Psoas muscle (tissue), 8 donors: ENCODE measurements at regions of chr11 and their contacts with region 1.

Region 1: GRCh38 chr11:27183672-27184457 is 143.2 kb downstream of the BBOX1 start:
- DNase-seq: no peak
- ATAC-seq: peak in 3 of 4 donors; percentile 67 to 81 (median 69)
- H3K4me3 ChIP-seq: no peak overlapping the region
- H3K27ac ChIP-seq: no peak overlapping the region
- H3K4me1 ChIP-seq: peaks cover 4% of the 10 kb centered on the region
- H3K27me3 ChIP-seq: no peaks in the 10 kb centered on the region
- CTCF ChIP-seq: peak; percentile 82

Region 2: DNA sequence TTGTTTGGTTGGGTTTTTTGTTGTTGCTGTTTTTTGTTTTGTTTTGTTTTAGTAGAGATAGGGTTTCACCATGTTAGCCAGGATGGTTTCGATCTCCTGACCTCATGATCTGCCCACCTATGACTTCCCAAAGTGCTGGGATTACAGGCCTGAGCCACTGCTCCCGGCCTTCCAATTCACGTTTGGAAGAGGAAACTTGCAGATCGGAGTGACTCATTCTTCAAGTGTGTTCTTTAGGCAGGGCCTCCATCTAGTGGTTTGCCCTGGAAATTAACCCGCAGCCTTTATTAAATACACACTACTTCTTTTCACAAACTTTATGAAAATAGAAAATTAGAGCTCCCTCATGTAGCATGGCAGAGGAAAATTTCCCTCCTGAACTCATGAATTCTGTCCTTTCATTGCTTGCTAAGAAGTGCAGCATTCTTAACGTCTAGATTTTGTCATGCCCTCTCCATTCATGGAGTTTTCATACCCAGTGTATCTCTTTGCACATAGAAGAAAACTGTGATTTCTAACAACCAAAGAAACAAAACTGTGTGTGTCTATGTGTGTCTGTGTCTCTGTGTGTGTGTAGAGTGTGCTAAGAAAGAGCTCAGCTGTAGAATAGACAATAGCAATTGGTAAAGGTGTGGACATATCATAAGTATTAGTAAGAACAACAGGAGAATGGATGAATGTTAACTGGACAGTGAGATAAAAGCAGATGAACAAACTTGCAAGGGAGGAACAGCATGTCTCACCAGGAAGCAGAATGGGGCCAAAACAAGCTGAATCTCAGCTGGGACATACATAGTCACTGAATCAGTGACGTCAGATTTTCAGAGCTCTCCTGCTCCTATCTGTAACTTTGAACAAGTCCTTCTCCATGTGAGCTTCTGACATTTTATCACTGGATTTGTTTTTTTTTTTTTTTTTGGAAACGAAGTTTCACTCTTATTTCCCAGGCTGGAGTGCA is 24.9 kb before region 1 on chr11:
- intact Hi-C with region 1: no loop called
- DNase-seq: peak; percentile 18 to 45
- ATAC-seq: peak; percentile 73 to 98 (median 89)
- H3K4me3 ChIP-seq: no peak overlapping the region
- H3K27ac ChIP-seq: no peak overlapping the region
- H3K4me1 ChIP-seq: no peaks in the 10 kb centered on the region
- H3K27me3 ChIP-seq: no peaks in the 10 kb centered on the region
- CTCF ChIP-seq: peak; percentile 74

Region 3: DNA sequence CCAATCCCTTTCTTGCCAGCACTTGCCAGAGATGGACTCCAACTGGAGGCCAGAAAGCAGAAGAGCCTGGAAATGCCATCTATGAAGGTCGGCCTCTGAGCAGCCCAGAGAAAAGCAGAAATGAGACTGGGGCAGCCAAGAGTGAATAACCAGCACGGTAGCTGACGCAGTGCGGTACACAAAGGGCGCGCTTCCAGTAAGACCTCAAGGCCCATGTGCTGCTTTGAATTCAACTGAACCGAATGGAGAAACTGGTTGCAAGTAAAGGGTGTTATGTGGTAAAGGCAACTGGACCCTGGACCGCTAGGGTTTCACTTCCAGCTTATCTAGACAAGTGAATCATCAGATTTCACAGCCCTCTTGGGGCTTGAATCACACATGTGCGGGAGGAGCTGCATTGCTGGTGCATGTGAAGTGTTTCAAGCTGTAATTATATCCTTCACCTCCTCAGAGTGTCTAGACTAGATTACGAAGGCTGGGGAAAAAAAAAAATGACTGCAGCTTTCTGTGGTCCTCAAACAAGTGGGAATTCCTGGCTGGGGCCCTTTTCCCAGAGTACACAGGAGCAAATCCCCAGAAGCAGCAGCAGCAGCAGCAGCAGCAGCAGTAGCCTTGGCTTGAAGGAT is 50.3 kb after region 1 on chr11:
- intact Hi-C with region 1: loop called in 1 of 2 experiments (anchors 10 kb)
- DNase-seq: peak; percentile 52 to 61
- ATAC-seq: peak; percentile 89 to 96 (median 94)
- H3K4me3 ChIP-seq: peak overlapping the region; percentile 52
- H3K27ac ChIP-seq: peak overlapping the region; percentile 89
- H3K4me1 ChIP-seq: peaks cover 15% of the 10 kb centered on the region
- H3K27me3 ChIP-seq: no peaks in the 10 kb centered on the region
- CTCF ChIP-seq: peak; percentile 13

Region 4: DNA sequence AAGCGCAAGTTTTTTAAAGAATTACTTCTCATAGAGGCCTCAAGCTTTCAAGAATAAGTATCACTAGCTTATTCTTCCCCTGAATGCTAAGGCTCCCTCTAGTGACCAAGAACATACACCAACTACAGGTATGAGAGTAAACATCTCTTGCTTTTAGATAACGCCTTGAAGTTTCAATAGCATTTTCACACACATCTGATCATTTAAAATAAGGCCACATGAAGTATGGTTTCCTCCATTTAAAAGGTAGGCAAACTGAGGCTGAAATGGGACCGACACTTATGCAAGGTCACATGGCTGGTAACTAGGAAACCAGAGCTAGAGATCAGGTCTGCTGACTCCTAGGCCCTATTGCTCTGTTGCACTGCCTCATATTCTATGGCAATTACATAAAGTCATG is 112.6 kb after region 1 on chr11:
- intact Hi-C with region 1: loop called (anchors 1 to 2 kb)
- DNase-seq: no peak
- ATAC-seq: peak in 3 of 4 donors; percentile 72 to 91 (median 78)
- H3K4me3 ChIP-seq: no peak overlapping the region
- H3K27ac ChIP-seq: no peak overlapping the region
- H3K4me1 ChIP-seq: no peaks in the 10 kb centered on the region
- H3K27me3 ChIP-seq: no peaks in the 10 kb centered on the region
- CTCF ChIP-seq: peak; percentile 78

Region 5: GRCh38 chr11:27485930-27486773 is 302.3 kb after region 1 on chr11:
- intact Hi-C with region 1: loop called (anchors 2 kb)
- DNase-seq: no peak
- ATAC-seq: peak in 3 of 4 donors; percentile 67 to 84 (median 72)
- H3K4me3 ChIP-seq: no peak overlapping the region
- H3K27ac ChIP-seq: no peak overlapping the region
- H3K4me1 ChIP-seq: peaks cover 6% of the 10 kb centered on the region
- H3K27me3 ChIP-seq: no peaks in the 10 kb centered on the region
- CTCF ChIP-seq: peak; percentile 95